ENCODE measurements at regions of chr12 and their contacts with region 1.

Region 1: GRCh38 chr12:94762259-94762942 is 112.0 kb upstream of the TMCC3 start:
- DNase-seq: no peak
- ATAC-seq: peak; percentile 50 to 58 (median 52)
- H3K4me3 ChIP-seq: no peak overlapping the region
- H3K4me3 Mint-ChIP-seq: peak overlapping the region; percentile 59
- H3K27ac ChIP-seq: no peak overlapping the region
- H3K27ac Mint-ChIP-seq: peak overlapping the region; percentile 74 to 80
- H3K4me1 ChIP-seq: peaks cover 5% of the 10 kb centered on the region
- H3K4me1 Mint-ChIP-seq: peaks cover 17 to 23% of the 10 kb centered on the region in 2 donors
- H3K27me3 ChIP-seq: no peaks in the 10 kb centered on the region
- H3K27me3 Mint-ChIP-seq: peaks cover 0 to 7% of the 10 kb centered on the region in 2 donors
- CTCF ChIP-seq: no peak

Region 2: GRCh38 chr12:94139816-94140215 is 622.6 kb before region 1 on chr12:
- intact Hi-C with region 1: loop called (anchors 5 kb)
- DNase-seq: no peak
- ATAC-seq: no peak
- H3K4me3 ChIP-seq: no peak overlapping the region
- H3K4me3 Mint-ChIP-seq: no peak overlapping the region
- H3K27ac ChIP-seq: no peak overlapping the region
- H3K27ac Mint-ChIP-seq: no peak overlapping the region
- H3K4me1 ChIP-seq: no peaks in the 10 kb centered on the region
- H3K4me1 Mint-ChIP-seq: no peaks in the 10 kb centered on the region
- H3K27me3 ChIP-seq: no peaks in the 10 kb centered on the region
- H3K27me3 Mint-ChIP-seq: peaks cover 9 to 12% of the 10 kb centered on the region in 2 donors
- CTCF ChIP-seq: no peak

Region 3: GRCh38 chr12:94545935-94546771 is 216.2 kb before region 1 on chr12:
- intact Hi-C with region 1: loop called (anchors 2 kb)
- DNase-seq: peak in 1 of 2 donors; percentile 34
- ATAC-seq: peak; percentile 75 to 91 (median 88)
- H3K4me3 ChIP-seq: no peak overlapping the region
- H3K4me3 Mint-ChIP-seq: no peak overlapping the region
- H3K27ac ChIP-seq: no peak overlapping the region
- H3K27ac Mint-ChIP-seq: no peak overlapping the region
- H3K4me1 ChIP-seq: no peaks in the 10 kb centered on the region
- H3K4me1 Mint-ChIP-seq: peaks cover 0 to 5% of the 10 kb centered on the region in 2 donors
- H3K27me3 ChIP-seq: no peaks in the 10 kb centered on the region
- H3K27me3 Mint-ChIP-seq: peaks cover 0 to 3% of the 10 kb centered on the region in 2 donors
- CTCF ChIP-seq: peak; percentile 59

Region 4: GRCh38 chr12:94603434-94604365 is 158.7 kb before region 1 on chr12:
- intact Hi-C with region 1: loop called (anchors 1 kb)
- DNase-seq: peak; percentile 53 to 79
- ATAC-seq: peak; percentile 87 to 95 (median 94)
- H3K4me3 ChIP-seq: no peak overlapping the region
- H3K4me3 Mint-ChIP-seq: no peak overlapping the region
- H3K27ac ChIP-seq: no peak overlapping the region
- H3K27ac Mint-ChIP-seq: peak overlapping the region in 1 of 2 donors; percentile 32
- H3K4me1 ChIP-seq: peaks cover 7% of the 10 kb centered on the region
- H3K4me1 Mint-ChIP-seq: peaks cover 15 to 33% of the 10 kb centered on the region in 2 donors
- H3K27me3 ChIP-seq: no peaks in the 10 kb centered on the region
- H3K27me3 Mint-ChIP-seq: no peaks in the 10 kb centered on the region
- CTCF ChIP-seq: peak; percentile 74

Region 5: GRCh38 chr12:94710933-94711332 is 51.5 kb before region 1 on chr12:
- intact Hi-C with region 1: no loop called
- DNase-seq: peak in 1 of 2 donors; percentile 49
- ATAC-seq: peak in 2 of 3 donors; percentile 57 to 60
- H3K4me3 ChIP-seq: no peak overlapping the region
- H3K4me3 Mint-ChIP-seq: no peak overlapping the region
- H3K27ac ChIP-seq: no peak overlapping the region
- H3K27ac Mint-ChIP-seq: no peak overlapping the region
- H3K4me1 ChIP-seq: no peaks in the 10 kb centered on the region
- H3K4me1 Mint-ChIP-seq: peaks cover 0 to 4% of the 10 kb centered on the region in 2 donors
- H3K27me3 ChIP-seq: no peaks in the 10 kb centered on the region
- H3K27me3 Mint-ChIP-seq: peaks cover 0 to 9% of the 10 kb centered on the region in 2 donors
- CTCF ChIP-seq: peak; percentile 32

Region 6: GRCh38 chr12:94740601-94741362 is 21.6 kb before region 1 on chr12:
- intact Hi-C with region 1: no loop called
- DNase-seq: no peak
- ATAC-seq: no peak
- H3K4me3 ChIP-seq: no peak overlapping the region
- H3K4me3 Mint-ChIP-seq: no peak overlapping the region
- H3K27ac ChIP-seq: no peak overlapping the region
- H3K27ac Mint-ChIP-seq: no peak overlapping the region
- H3K4me1 ChIP-seq: no peaks in the 10 kb centered on the region
- H3K4me1 Mint-ChIP-seq: no peaks in the 10 kb centered on the region
- H3K27me3 ChIP-seq: no peaks in the 10 kb centered on the region
- H3K27me3 Mint-ChIP-seq: peaks cover 9 to 21% of the 10 kb centered on the region in 2 donors
- CTCF ChIP-seq: no peak